Heart right ventricle (tissue), 16 donors: ENCODE measurements at regions of chr5 and their contacts with region 1.

Region 1: GRCh38 chr5:123700398-123701287 is 188.7 kb downstream of the CSNK1G3 start:
- DNase-seq: peak in 1 of 2 donors; percentile 34
- ATAC-seq: peak; percentile 30 to 89 (median 72)
- H3K4me3 ChIP-seq: no peak overlapping the region
- H3K27ac ChIP-seq: peak overlapping the region in 6 of 10 donors; percentile 13 to 61 (median 37)
- H3K4me1 ChIP-seq: peaks cover 0 to 29% (median 11%) of the 10 kb centered on the region in 9 donors
- H3K27me3 ChIP-seq: no peaks in the 10 kb centered on the region
- CTCF ChIP-seq: no peak

Region 2: GRCh38 chr5:123164054-123164453 is 536.6 kb before region 1 on chr5:
- intact Hi-C with region 1: no loop called
- DNase-seq: no peak
- ATAC-seq: peak in 2 of 8 donors; percentile 28 to 54
- H3K4me3 ChIP-seq: no peak overlapping the region
- H3K27ac ChIP-seq: no peak overlapping the region
- H3K4me1 ChIP-seq: peaks cover 0 to 6% (median 0%) of the 10 kb centered on the region in 9 donors
- H3K27me3 ChIP-seq: no peaks in the 10 kb centered on the region
- CTCF ChIP-seq: no peak

Region 3: GRCh38 chr5:123776761-123777160 is 76.1 kb after region 1 on chr5:
- intact Hi-C with region 1: no loop called
- DNase-seq: no peak
- ATAC-seq: no peak
- H3K4me3 ChIP-seq: no peak overlapping the region
- H3K27ac ChIP-seq: no peak overlapping the region
- H3K4me1 ChIP-seq: no peaks in the 10 kb centered on the region
- H3K27me3 ChIP-seq: no peaks in the 10 kb centered on the region
- CTCF ChIP-seq: no peak

Region 4: DNA sequence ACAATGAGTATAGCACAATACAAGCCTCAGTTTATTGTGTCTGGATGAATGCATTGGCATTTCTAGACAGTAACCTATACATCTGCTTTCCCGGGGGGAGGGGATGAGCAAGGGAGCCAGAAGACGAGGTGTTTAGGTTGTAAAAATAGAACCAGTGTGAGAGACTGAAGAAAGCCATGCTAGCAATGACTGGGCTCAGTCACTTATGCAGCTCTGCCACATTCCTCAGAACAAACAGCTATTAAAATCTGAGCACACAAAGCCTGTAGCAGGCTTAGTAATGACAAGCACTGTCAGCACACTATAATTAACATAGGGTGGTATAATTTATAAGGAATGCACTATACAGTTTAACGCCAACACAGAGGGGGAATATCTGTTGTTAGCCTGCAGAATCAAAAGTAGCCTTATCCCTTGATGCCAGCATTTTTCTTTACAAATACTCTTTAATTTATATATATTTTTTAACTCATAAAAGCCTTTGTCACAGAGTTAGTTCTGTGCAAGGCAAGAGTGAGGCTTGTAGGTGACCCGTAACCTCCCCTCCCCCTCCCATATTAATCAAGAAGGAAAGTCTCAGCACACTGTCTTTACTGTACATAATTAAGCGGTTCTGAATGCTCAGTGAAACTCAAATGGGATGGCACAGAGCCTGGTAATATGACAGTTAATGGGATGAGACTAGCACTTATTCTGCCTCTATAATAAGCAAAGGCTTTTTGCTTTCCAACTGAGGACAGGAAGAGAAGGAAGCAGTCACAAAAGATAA is 106.7 kb after region 1 on chr5:
- intact Hi-C with region 1: loop called in 1 of 10 experiments (anchors 5 kb)
- DNase-seq: no peak
- ATAC-seq: peak; percentile 47 to 89 (median 70)
- H3K4me3 ChIP-seq: no peak overlapping the region
- H3K27ac ChIP-seq: peak overlapping the region in 6 of 10 donors; percentile 41 to 77 (median 62)
- H3K4me1 ChIP-seq: peaks cover 6 to 59% (median 41%) of the 10 kb centered on the region in 9 donors
- H3K27me3 ChIP-seq: no peaks in the 10 kb centered on the region
- CTCF ChIP-seq: no peak

Region 5: DNA sequence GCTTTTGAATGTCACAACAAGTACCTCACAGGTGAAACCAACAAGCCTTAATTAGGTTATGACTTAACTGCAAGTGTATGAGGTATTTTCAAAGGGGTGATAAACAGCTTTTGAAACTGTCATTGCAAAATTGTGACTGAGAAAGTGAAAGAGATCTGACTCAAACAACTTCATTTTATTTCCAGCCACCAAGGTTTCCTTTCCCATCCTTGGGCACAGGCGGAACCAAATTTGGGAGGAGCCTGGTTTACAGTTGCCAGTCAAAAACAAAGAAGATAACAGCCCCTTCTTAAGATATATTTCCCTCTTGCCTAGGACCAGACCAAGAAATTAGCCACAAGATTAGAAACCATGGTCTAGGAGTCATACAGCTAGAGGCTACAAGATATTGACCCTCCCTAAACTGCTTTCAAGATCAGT is 228.4 kb after region 1 on chr5:
- intact Hi-C with region 1: loop called in 1 of 10 experiments (anchors 10 kb)
- DNase-seq: no peak
- ATAC-seq: no peak
- H3K4me3 ChIP-seq: no peak overlapping the region
- H3K27ac ChIP-seq: peak overlapping the region in 1 of 10 donors; percentile 9
- H3K4me1 ChIP-seq: no peaks in the 10 kb centered on the region
- H3K27me3 ChIP-seq: no peaks in the 10 kb centered on the region
- CTCF ChIP-seq: no peak

Region 6: GRCh38 chr5:125550274-125550673 is 1849.6 kb after region 1 on chr5:
- intact Hi-C with region 1: no loop called
- DNase-seq: no peak
- ATAC-seq: peak in 6 of 8 donors; percentile 43 to 82 (median 58)
- H3K4me3 ChIP-seq: no peak overlapping the region
- H3K27ac ChIP-seq: no peak overlapping the region
- H3K4me1 ChIP-seq: peaks cover 0 to 14% (median 9%) of the 10 kb centered on the region in 9 donors
- H3K27me3 ChIP-seq: no peaks in the 10 kb centered on the region
- CTCF ChIP-seq: no peak